ENCODE measurements at regions of chr5 and their contacts with region 1.

Region 1: DNA sequence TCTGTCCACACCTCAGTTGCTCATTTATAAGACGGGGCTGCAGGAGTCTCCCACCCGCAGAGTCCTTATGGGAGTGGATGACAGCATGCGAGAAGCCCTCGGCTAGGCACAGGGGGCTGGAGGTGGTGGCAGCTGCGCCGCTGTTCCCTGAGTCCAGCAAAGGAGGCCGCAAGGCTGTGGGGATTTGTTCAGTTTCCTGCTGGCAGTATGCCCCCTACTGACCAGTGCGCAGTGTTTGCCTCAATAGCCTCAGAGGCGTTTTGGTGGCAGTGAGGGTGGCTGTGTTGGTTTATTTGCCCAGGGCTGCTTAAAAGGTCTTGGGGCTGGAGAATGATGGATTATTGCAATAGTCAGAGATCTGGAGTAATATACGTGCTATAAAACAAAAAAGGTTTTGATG is 176.3 kb upstream of the OTULINL start:
- DNase-seq: no peak
- H3K4me3 Mint-ChIP-seq: no peak overlapping the region
- H3K27ac Mint-ChIP-seq: no peak overlapping the region
- H3K4me1 Mint-ChIP-seq: peaks cover 10% of the 10 kb centered on the region
- H3K27me3 Mint-ChIP-seq: no peaks in the 10 kb centered on the region
- CTCF ChIP-seq: peak; percentile 14

Region 2: GRCh38 chr5:13930541-13931172 is 474.6 kb before region 1 on chr5:
- CTCF ChIA-PET with region 1: no interaction called
- POLR2A ChIA-PET with region 1: no interaction called
- intact Hi-C with region 1: no loop called
- DNase-seq: no peak
- H3K4me3 Mint-ChIP-seq: no peak overlapping the region
- H3K27ac Mint-ChIP-seq: no peak overlapping the region
- H3K4me1 Mint-ChIP-seq: peaks cover 9% of the 10 kb centered on the region
- H3K27me3 Mint-ChIP-seq: no peaks in the 10 kb centered on the region
- CTCF ChIP-seq: no peak

Region 3: DNA sequence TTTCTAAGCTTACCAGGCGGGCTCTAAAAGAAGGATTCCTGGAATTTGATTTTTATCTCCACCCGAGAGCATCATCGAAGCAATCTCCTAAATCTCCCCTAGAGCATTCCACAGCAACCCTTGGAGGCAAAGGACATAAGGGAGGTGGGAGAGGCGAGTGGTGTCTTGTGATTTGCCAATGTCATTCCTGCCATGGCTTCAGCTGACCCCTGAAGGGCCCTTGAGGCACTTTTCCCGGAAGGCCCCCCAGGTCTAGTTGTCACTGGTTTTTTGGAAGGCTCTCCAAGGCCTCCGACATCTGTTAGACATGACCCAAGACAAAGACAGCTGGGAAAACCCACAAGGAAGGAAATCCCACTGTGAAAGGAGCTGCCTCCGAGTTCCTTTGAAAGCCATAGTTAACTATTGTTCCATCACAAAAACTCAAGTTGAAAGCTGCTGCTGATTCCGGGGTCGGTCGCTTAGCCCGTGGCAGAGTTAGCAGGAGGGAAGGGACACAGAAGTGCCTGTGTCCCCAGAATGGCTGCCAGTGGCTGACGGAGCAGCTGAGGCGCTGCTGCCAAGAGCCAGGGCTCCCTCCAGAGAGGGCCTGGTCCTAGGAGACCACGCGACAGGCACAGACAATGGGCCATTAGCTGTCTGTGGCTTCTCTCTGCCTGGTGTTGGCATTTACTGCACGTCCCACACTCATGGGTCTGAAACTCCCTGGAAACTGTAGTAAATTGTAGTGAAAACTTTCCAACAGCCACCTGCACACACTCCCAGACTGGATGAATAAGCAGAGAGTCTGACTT is 286.5 kb before region 1 on chr5:
- CTCF ChIA-PET with region 1: no interaction called
- POLR2A ChIA-PET with region 1: no interaction called
- intact Hi-C with region 1: no loop called
- DNase-seq: no peak
- H3K4me3 Mint-ChIP-seq: no peak overlapping the region
- H3K27ac Mint-ChIP-seq: no peak overlapping the region
- H3K4me1 Mint-ChIP-seq: no peaks in the 10 kb centered on the region
- H3K27me3 Mint-ChIP-seq: no peaks in the 10 kb centered on the region
- CTCF ChIP-seq: no peak

Region 4: GRCh38 chr5:14281746-14282181 is 123.5 kb before region 1 on chr5:
- CTCF ChIA-PET with region 1: no interaction called
- POLR2A ChIA-PET with region 1: no interaction called
- intact Hi-C with region 1: no loop called
- DNase-seq: no peak
- H3K4me3 Mint-ChIP-seq: no peak overlapping the region
- H3K27ac Mint-ChIP-seq: no peak overlapping the region
- H3K4me1 Mint-ChIP-seq: peaks cover 10% of the 10 kb centered on the region
- H3K27me3 Mint-ChIP-seq: no peaks in the 10 kb centered on the region
- CTCF ChIP-seq: no peak

Region 5: GRCh38 chr5:14362491-14362890 is 42.8 kb before region 1 on chr5:
- CTCF ChIA-PET with region 1: no interaction called
- POLR2A ChIA-PET with region 1: no interaction called
- intact Hi-C with region 1: no loop called
- DNase-seq: no peak
- H3K4me3 Mint-ChIP-seq: no peak overlapping the region
- H3K27ac Mint-ChIP-seq: no peak overlapping the region
- H3K4me1 Mint-ChIP-seq: no peaks in the 10 kb centered on the region
- H3K27me3 Mint-ChIP-seq: no peaks in the 10 kb centered on the region
- CTCF ChIP-seq: no peak

Region 6: GRCh38 chr5:14656898-14657297 is 251.6 kb after region 1 on chr5:
- CTCF ChIA-PET with region 1: no interaction called
- POLR2A ChIA-PET with region 1: no interaction called
- intact Hi-C with region 1: loop called (anchors 1 kb)
- DNase-seq: no peak
- H3K4me3 Mint-ChIP-seq: no peak overlapping the region
- H3K27ac Mint-ChIP-seq: no peak overlapping the region
- H3K4me1 Mint-ChIP-seq: peaks cover 19% of the 10 kb centered on the region
- H3K27me3 Mint-ChIP-seq: no peaks in the 10 kb centered on the region
- CTCF ChIP-seq: no peak